ENCODE measurements at regions of chr5 and their contacts with region 1.

Region 1: GRCh38 chr5:95664204-95664786 is 17.7 kb downstream of the RFESD start:
- DNase-seq: no peak
- H3K4me3 ChIP-seq: no peak overlapping the region; a peak in 1 of 4 replicates
- H3K27ac ChIP-seq: peak overlapping the region; percentile 6 to 34; a peak in 3 of 4 replicates
- H3K4me1 ChIP-seq: peaks cover 0 to 11% of the 10 kb centered on the region in 2 experiments; a peak in 3 of 4 replicates
- H3K27me3 ChIP-seq: no peaks in the 10 kb centered on the region
- CTCF ChIP-seq: peak; percentile 94
- EP300 ChIP-seq: no peak
- RAD21 ChIP-seq: peak; percentile 76

Region 2: DNA sequence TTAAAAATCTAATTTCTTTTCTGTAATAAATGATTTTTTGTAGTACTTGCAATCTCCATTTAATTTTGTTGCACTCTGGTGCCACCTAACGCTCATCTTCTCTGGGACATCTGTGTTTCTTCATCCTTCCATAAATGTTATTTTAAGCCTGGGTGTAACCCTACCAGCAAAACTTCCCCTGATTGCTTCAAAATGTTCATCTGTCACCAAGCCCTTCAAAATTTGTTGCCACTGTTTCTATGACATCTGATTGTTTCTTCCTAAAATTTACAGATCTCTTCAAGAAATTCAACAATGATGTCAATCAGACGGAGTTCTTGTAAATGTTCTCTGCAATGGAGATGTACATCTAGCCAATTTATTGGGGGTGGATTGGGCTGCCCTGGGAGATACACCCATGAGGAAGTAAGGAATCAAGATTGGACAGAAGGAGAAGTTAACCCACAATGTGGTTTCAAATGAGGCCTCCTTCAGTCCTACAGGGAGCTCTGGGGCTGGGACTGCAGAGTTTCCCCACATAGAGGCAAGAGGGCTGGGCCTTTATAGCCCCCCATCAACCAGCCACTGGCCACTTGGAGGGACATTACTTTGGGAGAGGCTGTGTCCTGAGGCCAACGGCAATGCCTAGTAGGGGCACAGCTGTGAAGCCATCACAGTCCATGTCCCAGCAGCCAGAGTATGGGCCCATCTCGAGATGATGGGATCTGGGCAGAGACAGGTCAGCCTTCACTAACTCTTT is 402.7 kb before region 1 on chr5:
- CTCF ChIA-PET with region 1: no interaction called
- POLR2A ChIA-PET with region 1: no interaction called
- DNase-seq: no peak
- H3K4me3 ChIP-seq: no peak overlapping the region
- H3K27ac ChIP-seq: no peak overlapping the region
- H3K4me1 ChIP-seq: no peaks in the 10 kb centered on the region
- H3K27me3 ChIP-seq: peaks cover 13% of the 10 kb centered on the region
- CTCF ChIP-seq: peak; percentile 70
- EP300 ChIP-seq: no peak
- RAD21 ChIP-seq: peak; percentile 66

Region 3: DNA sequence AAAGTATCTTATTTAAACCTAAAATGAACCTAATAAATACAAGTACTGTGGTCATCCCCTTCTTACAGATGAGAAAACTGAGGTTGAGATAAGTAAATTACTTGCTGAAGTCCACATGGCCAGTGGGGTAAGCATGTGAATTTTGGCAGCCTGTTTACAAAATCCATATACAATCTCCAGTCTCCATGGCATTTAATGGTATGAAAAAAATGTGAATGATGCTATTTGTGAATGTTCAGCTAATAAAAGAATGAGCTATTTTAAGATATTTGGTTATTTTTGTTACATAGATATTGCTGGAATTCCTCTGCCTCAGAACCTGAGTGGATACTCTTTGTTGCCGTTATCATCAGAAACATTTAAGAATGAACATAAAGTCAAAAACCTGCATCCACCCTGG is 63.7 kb before region 1 on chr5:
- CTCF ChIA-PET with region 1: no interaction called
- POLR2A ChIA-PET with region 1: no interaction called
- DNase-seq: no peak
- H3K4me3 ChIP-seq: no peak overlapping the region
- H3K27ac ChIP-seq: no peak overlapping the region
- H3K4me1 ChIP-seq: no peaks in the 10 kb centered on the region
- H3K27me3 ChIP-seq: no peaks in the 10 kb centered on the region
- CTCF ChIP-seq: no peak
- EP300 ChIP-seq: no peak
- RAD21 ChIP-seq: no peak

Region 4: DNA sequence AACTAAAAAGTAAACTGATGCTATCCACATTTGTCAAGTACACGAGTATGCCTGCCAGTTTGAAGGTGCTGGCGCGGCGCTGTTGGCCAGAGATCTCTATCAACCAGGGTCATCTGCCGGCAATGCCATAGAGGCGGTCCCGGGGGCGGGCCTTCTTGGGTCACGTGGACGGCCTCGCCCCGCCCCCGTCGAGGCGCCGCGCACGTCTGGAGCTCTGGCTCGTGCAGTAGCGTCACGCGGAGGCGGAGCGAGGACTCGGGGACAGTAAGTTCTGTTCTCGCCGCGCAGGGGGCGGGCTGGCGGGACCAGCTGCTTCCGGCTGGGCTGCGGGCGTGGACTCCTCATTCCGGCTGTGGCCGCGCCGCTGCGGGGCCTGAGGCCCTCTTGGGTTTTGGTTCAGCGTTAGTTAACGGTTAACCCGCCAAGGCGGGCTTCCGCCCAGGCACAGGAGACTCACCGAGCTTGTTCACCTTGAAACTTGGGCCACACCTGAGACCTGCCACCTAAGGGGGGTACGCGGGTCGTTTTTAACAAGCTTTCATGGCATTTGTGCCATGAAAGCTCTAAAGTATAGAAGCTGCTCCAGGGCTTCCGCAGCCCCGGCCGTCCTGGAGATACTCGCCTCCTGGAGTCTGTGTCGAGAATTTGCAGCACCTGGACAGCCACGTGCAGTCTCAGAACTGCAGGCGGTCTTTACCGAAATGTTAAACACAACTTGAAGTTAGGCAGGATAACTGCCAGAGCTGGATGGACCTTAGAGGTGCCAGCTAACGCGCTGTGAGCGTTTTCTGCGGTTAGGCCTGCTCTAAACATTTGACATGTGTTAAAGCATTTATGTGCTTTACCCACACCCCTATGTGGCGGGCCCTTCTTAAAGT is 17.5 kb before region 1 on chr5 and contains the start of gene RFESD:
- CTCF ChIA-PET with region 1: interaction called, 17 read pairs
- POLR2A ChIA-PET with region 1: no interaction called
- DNase-seq: peak; percentile 94
- H3K4me3 ChIP-seq: peak within 1 kb of the TSS; percentile 59 to 66
- H3K27ac ChIP-seq: peak within 1 kb of the TSS; percentile 64 to 89
- H3K4me1 ChIP-seq: peaks cover 0 to 6% of the 10 kb centered on the region in 2 experiments; a peak in 2 of 4 replicates
- H3K27me3 ChIP-seq: no peaks in the 10 kb centered on the region
- CTCF ChIP-seq: no peak
- EP300 ChIP-seq: peak; percentile 28 to 35; a peak in 2 of 4 replicates
- RAD21 ChIP-seq: no peak
- polyA plus RNA-seq, gene RFESD: 1.8 and 3.1 TPM in 2 replicates

Region 5: GRCh38 chr5:95723632-95724364 is 59.5 kb after region 1 on chr5:
- CTCF ChIA-PET with region 1: interaction called, 14 read pairs
- POLR2A ChIA-PET with region 1: no interaction called
- DNase-seq: peak; percentile 75
- H3K4me3 ChIP-seq: no peak overlapping the region
- H3K27ac ChIP-seq: peak overlapping the region in 1 of 2 experiments; percentile 93; a peak in 2 of 4 replicates
- H3K4me1 ChIP-seq: peaks cover 29 to 46% of the 10 kb centered on the region in 2 experiments; a peak in 3 of 4 replicates
- H3K27me3 ChIP-seq: no peaks in the 10 kb centered on the region
- CTCF ChIP-seq: no peak
- EP300 ChIP-seq: peak in 1 of 2 experiments; percentile 51; a peak in 1 of 4 replicates
- RAD21 ChIP-seq: peak; percentile 29

Region 6: DNA sequence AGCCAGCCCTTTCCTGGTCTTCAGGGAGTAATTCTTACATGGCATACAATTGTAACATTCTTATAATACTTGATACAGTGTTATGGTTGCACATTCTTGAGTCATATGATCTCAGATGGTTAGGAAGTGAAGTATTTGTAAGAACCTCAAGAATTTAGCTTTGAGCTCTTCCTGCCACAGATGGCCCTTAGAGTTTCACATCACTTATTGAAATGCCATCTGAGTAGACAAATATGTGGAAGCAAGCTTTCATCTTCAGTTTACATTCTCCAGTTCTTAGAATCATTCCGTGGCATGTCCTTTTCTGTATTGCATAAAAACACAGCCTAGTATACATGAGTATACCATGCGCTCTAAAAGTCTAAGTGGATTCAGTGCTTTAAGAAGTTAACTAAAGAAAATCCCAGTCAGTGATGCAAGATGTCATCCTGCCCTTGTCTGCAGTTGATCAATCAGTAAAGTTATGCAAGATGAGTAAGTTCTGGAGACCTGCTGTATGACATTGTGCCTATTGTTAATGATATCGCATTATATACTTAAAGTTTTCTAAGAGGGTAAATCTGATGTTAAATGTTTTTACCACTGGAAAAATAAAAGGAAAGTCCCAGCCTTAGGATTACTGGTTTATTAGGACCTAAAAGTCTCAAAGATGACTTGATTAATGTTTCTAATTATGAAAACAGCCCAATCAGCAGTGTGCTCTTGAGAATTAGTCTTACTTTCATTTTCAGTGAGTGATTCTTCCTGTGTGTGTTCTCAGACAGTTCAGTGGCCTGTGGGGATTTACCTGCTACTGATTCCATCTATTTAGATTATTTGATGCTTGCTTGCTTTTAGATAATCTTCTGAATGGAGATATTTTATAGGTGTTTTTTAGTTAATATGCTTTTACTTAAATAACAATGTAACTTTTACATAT is 96.2 kb after region 1 on chr5:
- CTCF ChIA-PET with region 1: interaction called, 13 read pairs
- POLR2A ChIA-PET with region 1: no interaction called
- DNase-seq: no peak
- H3K4me3 ChIP-seq: peak overlapping the region; percentile 33 to 52; a peak in 3 of 4 replicates
- H3K27ac ChIP-seq: peak overlapping the region; percentile 77 to 88
- H3K4me1 ChIP-seq: peaks cover 33 to 40% of the 10 kb centered on the region in 2 experiments; a peak in 3 of 4 replicates
- H3K27me3 ChIP-seq: no peaks in the 10 kb centered on the region
- CTCF ChIP-seq: no peak
- EP300 ChIP-seq: peak; percentile 16 to 86; a peak in 3 of 4 replicates
- RAD21 ChIP-seq: no peak

Region 7: DNA sequence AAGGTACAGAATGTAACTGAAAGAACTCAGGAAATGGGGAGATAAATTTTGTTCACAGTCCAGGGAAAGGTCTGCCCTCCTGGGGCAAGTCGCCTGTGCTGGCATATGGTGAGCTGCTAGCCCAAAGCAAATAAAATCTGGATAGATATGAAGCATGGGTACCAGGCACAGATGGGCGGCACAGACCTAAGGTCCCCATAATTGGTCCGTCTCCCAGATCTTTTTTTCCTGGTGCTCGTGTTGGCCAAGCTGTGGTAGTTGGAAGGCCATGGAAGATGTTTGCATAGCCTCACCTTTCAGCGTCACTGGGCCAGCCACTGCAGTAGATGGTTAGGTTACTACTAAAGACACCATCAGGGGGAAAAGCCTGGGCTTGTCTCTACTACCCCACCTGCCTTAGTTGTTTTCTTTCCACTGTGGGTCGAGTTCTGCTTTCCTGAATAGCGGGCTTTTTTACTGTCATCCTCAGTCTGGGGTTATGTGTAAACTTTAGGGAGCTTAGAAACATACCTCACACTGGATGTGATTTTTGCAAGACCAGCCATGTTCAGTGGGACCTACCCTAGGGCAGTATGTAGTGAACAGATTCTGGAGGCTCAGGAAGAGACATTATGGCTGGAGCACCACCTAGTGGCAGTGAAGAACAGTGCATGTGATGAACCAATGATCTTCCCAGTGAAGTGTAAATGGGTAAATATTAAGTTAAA is 182.4 kb after region 1 on chr5:
- CTCF ChIA-PET with region 1: interaction called, 25 read pairs
- POLR2A ChIA-PET with region 1: no interaction called
- DNase-seq: peak; percentile 83
- H3K4me3 ChIP-seq: no peak overlapping the region; a peak in 1 of 4 replicates
- H3K27ac ChIP-seq: no peak overlapping the region
- H3K4me1 ChIP-seq: peaks cover 3 to 7% of the 10 kb centered on the region in 2 experiments; a peak in 2 of 4 replicates
- H3K27me3 ChIP-seq: no peaks in the 10 kb centered on the region
- CTCF ChIP-seq: peak; percentile 97
- EP300 ChIP-seq: no peak
- RAD21 ChIP-seq: peak; percentile 98

Region 8: GRCh38 chr5:96083361-96083881 is 419.1 kb after region 1 on chr5:
- CTCF ChIA-PET with region 1: no interaction called
- POLR2A ChIA-PET with region 1: no interaction called
- DNase-seq: no peak
- H3K4me3 ChIP-seq: no peak overlapping the region
- H3K27ac ChIP-seq: no peak overlapping the region
- H3K4me1 ChIP-seq: peaks cover 0 to 27% of the 10 kb centered on the region in 2 experiments; a peak in 3 of 4 replicates
- H3K27me3 ChIP-seq: no peaks in the 10 kb centered on the region
- CTCF ChIP-seq: no peak
- EP300 ChIP-seq: no peak
- RAD21 ChIP-seq: no peak